Naive thymus-derived CD4-positive, alpha-beta T cell (primary cell): ENCODE measurements at regions of chr6 and their contacts with region 1.

Region 1: GRCh38 chr6:11093589-11094410 is at the start of gene SMIM13:
- DNase-seq: peak; percentile 85 to 94 (median 93)
- ATAC-seq: peak; percentile 96
- H3K4me3 ChIP-seq: peak within 1 kb of the TSS; percentile 97
- H3K4me3 Mint-ChIP-seq: peak within 1 kb of the TSS; percentile 83 to 98 (median 97)
- H3K27ac ChIP-seq: peak within 1 kb of the TSS; percentile 88
- H3K27ac Mint-ChIP-seq: peak within 1 kb of the TSS; percentile 89 to 98 (median 97)
- H3K4me1 ChIP-seq: peaks cover 11 to 14% of the 10 kb centered on the region in 2 donors
- H3K4me1 Mint-ChIP-seq: peaks cover 21 to 43% (median 27%) of the 10 kb centered on the region in 7 donors
- H3K27me3 ChIP-seq: no peaks in the 10 kb centered on the region
- H3K27me3 Mint-ChIP-seq: no peaks in the 10 kb centered on the region
- total RNA-seq, gene SMIM13: 4.0 to 9.9 (median 4.4) TPM

Region 2: GRCh38 chr6:10694302-10695085 is 399.3 kb before region 1 on chr6 and contains the starts of genes C6orf52 and PAK1IP1:
- CTCF ChIA-PET with region 1: no interaction called
- POLR2A ChIA-PET with region 1: interaction called, 3 read pairs
- intact Hi-C with region 1: loop called in 1 of 2 experiments (anchors 1 kb)
- DNase-seq: peak; percentile 77 to 97 (median 96)
- ATAC-seq: peak; percentile 95
- H3K4me3 ChIP-seq: peak within 1 kb of the TSS; percentile 99
- H3K4me3 Mint-ChIP-seq: peak within 1 kb of the TSS; percentile 88 to 98 (median 94)
- H3K27ac ChIP-seq: peak within 1 kb of the TSS; percentile 90
- H3K27ac Mint-ChIP-seq: peak within 1 kb of the TSS; percentile 99 to 100 (median 100)
- H3K4me1 ChIP-seq: peaks cover 13 to 18% of the 10 kb centered on the region in 2 donors
- H3K4me1 Mint-ChIP-seq: peaks cover 20 to 52% (median 49%) of the 10 kb centered on the region in 7 donors
- H3K27me3 ChIP-seq: no peaks in the 10 kb centered on the region
- H3K27me3 Mint-ChIP-seq: peaks cover 0 to 4% (median 0%) of the 10 kb centered on the region in 5 donors
- total RNA-seq, gene C6orf52: 1.2 to 1.9 TPM in 2 of 5 experiments, not detected in the others
- total RNA-seq, gene PAK1IP1: 5.2 to 15.2 (median 8.0) TPM

Region 3: DNA sequence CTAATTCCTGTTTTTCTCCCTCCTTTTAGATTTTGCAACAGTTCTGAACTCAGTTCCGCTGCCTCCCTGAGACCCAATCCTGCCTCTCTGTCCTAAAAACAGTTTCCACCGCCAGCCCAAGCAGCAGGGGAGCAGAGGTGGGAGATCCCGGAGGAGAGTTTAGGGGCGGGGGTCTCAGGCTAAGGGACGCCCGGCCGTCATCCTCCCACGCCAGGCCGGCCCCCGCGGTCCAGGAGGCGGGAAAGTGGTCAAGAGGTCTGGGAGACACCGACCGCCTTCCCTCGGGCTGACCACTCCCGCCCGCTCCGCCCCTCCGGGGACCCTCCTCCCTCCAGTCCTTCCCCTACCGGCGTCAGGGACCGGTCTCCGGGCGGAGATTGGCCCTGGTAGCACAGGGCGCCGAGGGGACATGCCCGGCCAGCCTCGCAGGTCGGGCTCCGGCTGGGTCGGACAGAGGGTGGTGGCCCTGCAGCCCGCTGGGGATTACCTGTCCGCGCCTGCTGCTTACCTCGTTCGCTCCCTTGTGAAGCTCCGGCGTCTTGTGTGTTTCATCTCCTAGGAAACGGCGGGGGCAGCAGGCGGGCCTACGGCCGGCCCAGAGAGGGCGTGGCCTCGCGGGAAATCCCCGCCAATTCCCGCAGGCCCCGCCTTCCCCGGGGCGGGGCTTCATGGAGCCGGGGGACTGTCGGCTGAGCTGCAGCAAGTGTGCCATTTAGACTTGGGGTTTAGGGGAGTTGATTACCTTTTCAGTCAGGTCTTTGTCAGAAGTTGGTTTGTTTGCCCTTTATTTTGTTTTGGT is 255.6 kb before region 1 on chr6 and contains the start of gene MAK:
- CTCF ChIA-PET with region 1: no interaction called
- POLR2A ChIA-PET with region 1: no interaction called
- intact Hi-C with region 1: loop called (anchors 1 kb)
- DNase-seq: peak; percentile 80 to 93 (median 86)
- ATAC-seq: peak; percentile 98
- H3K4me3 ChIP-seq: peak within 1 kb of the TSS; percentile 59
- H3K4me3 Mint-ChIP-seq: peak within 1 kb of the TSS; percentile 71 to 89 (median 78)
- H3K27ac ChIP-seq: no peak within 1 kb of the TSS
- H3K27ac Mint-ChIP-seq: peak within 1 kb of the TSS in 4 of 9 donors; percentile 21 to 87 (median 55)
- H3K4me1 ChIP-seq: peaks cover 14 to 20% of the 10 kb centered on the region in 2 donors
- H3K4me1 Mint-ChIP-seq: peaks cover 10 to 22% (median 19%) of the 10 kb centered on the region in 7 donors
- H3K27me3 ChIP-seq: peaks cover 23 to 29% of the 10 kb centered on the region in 2 donors
- H3K27me3 Mint-ChIP-seq: peaks cover 52 to 65% (median 61%) of the 10 kb centered on the region in 5 donors
- total RNA-seq, gene MAK: 0.34 to 0.42 TPM in 2 of 5 experiments, not detected in the others

Region 4: DNA sequence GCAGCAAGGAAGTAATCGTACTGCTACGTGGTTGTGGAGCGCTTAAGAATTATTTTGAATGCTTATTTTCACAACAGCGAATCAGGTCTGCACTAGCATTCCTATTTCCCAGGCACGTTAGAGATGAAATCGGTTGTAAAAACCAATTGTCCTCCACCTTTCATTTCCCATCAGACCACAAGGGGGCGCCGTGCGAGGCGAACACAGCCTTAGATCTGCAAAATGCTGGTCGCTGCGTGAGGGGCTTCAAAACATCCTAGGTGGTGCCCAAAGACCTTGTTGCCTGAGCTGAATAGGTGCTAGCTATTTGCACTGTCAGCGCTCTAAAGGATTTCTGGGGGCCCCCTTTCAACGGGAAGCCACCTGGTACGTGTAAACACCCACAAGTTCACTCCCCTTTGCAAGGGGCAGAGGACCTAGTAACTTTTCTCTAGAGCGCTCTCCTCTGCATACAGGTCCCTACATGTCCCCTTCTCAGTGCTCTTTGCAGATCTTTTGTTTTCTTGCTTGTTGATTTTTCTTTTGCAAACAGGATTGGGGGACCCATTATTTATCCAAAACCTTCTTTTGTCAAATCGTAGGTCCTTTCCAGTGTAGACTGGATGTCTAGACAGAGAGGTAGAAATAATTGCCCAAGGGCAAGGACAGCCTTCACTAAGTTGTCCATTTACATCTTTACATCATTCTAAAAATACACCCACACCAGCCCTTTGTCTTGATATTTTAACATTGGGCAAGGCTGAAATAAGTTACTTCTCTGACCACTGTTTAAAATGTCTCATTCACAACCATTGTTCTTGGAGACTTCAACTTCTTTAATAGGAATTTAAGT is 78.9 kb after region 1 on chr6:
- CTCF ChIA-PET with region 1: no interaction called
- POLR2A ChIA-PET with region 1: no interaction called
- intact Hi-C with region 1: loop called in 1 of 2 experiments (anchors 1 kb)
- DNase-seq: peak; percentile 45 to 82 (median 68)
- ATAC-seq: peak; percentile 79
- H3K4me3 ChIP-seq: peak overlapping the region; percentile 25
- H3K4me3 Mint-ChIP-seq: peak overlapping the region in 8 of 10 donors; percentile 6 to 64 (median 53)
- H3K27ac ChIP-seq: no peak overlapping the region
- H3K27ac Mint-ChIP-seq: peak overlapping the region in 2 of 9 donors; percentile 12 to 16
- H3K4me1 ChIP-seq: peaks cover 6 to 10% of the 10 kb centered on the region in 2 donors
- H3K4me1 Mint-ChIP-seq: peaks cover 2 to 14% (median 10%) of the 10 kb centered on the region in 7 donors
- H3K27me3 ChIP-seq: no peaks in the 10 kb centered on the region
- H3K27me3 Mint-ChIP-seq: no peaks in the 10 kb centered on the region

Region 5: DNA sequence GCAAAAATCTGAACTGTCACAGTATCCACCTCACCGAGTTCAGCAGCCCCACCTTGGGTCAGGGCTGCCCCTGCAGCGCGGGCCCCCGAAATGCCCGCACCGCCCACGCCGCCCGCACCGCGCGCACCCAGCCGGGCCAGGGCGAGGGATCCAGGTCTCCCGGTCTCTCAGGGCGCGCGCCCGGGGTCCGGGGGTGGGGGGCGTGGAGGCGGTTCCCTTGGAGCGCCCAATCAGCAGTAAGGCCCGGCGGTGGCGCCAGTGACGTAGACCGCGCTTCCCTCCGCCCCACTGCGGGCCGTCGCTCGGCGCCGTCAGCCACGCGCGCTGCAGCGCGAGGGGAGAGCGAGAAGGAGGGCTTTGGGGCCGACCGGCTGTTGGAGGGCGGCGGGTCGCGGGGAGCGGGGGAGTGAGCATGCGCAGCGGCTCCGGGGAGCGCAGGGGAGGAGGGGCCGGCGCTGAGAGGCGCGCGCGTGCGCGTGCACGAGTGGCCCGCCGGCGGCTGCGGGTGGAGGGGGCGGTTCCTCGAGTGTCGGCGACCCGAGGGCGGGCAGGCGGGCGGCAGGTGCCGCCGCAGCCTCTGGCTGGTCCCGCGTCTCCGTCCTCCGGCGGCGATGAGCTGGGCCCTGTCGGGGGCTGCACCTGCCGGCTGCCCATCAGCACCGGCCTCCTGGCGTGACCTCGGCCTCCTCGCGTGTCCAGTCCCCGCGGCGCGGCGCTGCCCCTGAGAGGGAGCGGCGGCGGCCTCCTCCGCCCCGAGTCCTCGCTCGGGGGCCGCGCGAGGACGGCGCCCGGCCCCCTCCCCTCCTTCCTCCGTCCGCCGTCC is 443.6 kb after region 1 on chr6 and contains the start of gene TMEM170B:
- CTCF ChIA-PET with region 1: no interaction called
- POLR2A ChIA-PET with region 1: interaction called, 3 read pairs
- intact Hi-C with region 1: loop called (anchors 1 kb)
- DNase-seq: peak; percentile 94 to 99 (median 98)
- ATAC-seq: peak; percentile 95
- H3K4me3 ChIP-seq: peak within 1 kb of the TSS; percentile 62
- H3K4me3 Mint-ChIP-seq: peak within 1 kb of the TSS; percentile 82 to 90 (median 88)
- H3K27ac ChIP-seq: peak within 1 kb of the TSS; percentile 76
- H3K27ac Mint-ChIP-seq: peak within 1 kb of the TSS in 8 of 9 donors; percentile 67 to 93 (median 83)
- H3K4me1 ChIP-seq: peaks cover 4 to 5% of the 10 kb centered on the region in 2 donors
- H3K4me1 Mint-ChIP-seq: peaks cover 6 to 28% (median 19%) of the 10 kb centered on the region in 7 donors
- H3K27me3 ChIP-seq: no peaks in the 10 kb centered on the region
- H3K27me3 Mint-ChIP-seq: peaks cover 0 to 76% (median 7%) of the 10 kb centered on the region in 5 donors
- total RNA-seq, gene TMEM170B: 0.29 to 12.7 (median 3.4) TPM